ENCODE measurements at regions of chr15 and their contacts with region 1.

Region 1: DNA sequence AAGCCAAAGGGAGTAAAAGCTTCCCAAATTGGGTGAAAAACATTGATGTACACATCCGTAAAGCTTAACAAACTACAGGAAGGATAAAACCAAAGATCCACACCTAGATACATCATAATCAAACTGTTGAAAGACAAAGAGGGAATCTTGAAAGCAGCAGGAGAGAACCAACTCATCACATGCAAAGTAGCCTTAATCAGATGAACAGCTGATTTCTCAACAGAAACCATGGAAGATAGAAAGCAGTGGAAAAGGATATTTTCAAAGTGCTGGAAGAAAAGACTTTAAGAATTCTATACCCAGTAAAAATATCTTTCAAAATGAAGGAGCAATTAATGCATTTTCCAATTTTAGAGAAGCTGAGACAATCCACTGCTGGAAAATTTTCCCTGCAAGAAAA is 36.8 kb downstream of the CHRNA7 start:
- DNase-seq: no peak
- H3K4me3 ChIP-seq: no peak overlapping the region
- H3K27ac ChIP-seq: no peak overlapping the region
- H3K4me1 ChIP-seq: no peaks in the 10 kb centered on the region
- H3K27me3 ChIP-seq: no peaks in the 10 kb centered on the region
- CTCF ChIP-seq: no peak
- EP300 ChIP-seq: no peak
- POLR2A ChIP-seq: no peak

Region 2: GRCh38 chr15:31733424-31733823 is 333.7 kb before region 1 on chr15:
- in situ Hi-C with region 1: no loop called
- intact Hi-C with region 1: no loop called
- DNase-seq: no peak
- H3K4me3 ChIP-seq: no peak overlapping the region
- H3K27ac ChIP-seq: no peak overlapping the region
- H3K4me1 ChIP-seq: no peaks in the 10 kb centered on the region
- H3K27me3 ChIP-seq: no peaks in the 10 kb centered on the region
- CTCF ChIP-seq: no peak
- EP300 ChIP-seq: no peak
- POLR2A ChIP-seq: no peak

Region 3: DNA sequence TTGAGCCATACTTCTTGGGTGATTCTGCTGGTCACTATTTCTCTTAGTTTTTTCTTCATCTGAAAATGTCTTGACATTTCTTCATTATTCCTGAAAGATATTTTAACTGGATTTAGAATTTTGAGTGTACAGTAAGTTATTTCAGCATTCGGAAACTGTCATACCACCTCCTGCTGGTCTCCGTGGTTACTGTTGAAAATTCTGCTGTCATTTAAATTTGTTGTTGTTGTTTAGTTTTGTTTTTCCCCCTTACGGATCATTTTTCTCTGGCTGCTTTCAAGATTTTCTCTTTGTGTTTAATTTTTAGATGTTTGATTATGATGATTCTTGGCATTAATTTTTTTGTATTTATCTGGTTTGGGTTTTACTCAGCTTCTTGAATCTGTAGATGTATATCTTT is 63.7 kb after region 1 on chr15:
- in situ Hi-C with region 1: loop called in 1 of 4 experiments (anchors 10 kb)
- intact Hi-C with region 1: no loop called
- DNase-seq: no peak
- H3K4me3 ChIP-seq: no peak overlapping the region
- H3K27ac ChIP-seq: no peak overlapping the region
- H3K4me1 ChIP-seq: no peaks in the 10 kb centered on the region
- H3K27me3 ChIP-seq: no peaks in the 10 kb centered on the region
- CTCF ChIP-seq: no peak
- EP300 ChIP-seq: no peak
- POLR2A ChIP-seq: no peak